T-cell (primary cell): ENCODE measurements at regions of chr9 and their contacts with region 1.

Region 1: DNA sequence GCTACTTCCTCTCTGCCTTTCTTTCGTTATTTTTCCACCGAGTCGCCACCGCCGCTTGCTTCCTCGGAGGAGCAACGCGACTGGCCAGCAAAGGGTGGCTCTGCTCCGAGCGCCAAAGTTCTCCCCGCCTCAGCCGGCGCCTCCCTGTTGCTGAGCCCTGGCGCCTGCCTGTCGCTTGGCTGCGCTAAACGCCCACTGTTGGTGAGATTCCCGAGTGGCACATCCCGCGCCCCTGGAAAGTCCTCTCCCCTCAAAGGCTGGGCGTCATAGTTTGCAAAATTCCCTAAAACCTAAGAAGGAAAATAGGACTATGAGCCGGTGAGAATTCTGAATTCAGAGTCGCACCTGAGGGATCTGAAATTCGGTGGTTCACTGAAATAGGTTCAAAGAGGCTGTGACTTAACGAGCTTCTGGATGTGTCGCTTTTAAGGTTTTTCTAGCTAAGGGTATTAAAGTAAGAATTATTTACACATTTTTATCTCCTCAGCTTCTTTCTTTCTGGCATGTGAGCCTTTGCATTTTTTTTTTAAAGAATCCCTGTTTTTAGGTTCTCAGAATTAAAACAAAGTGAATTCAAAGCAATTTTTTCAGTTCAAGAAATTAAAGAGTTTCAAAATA is at the start of gene GRIN3A:
- DNase-seq: no peak
- ATAC-seq: no peak
- H3K4me3 ChIP-seq: no peak within 1 kb of the TSS
- H3K4me3 Mint-ChIP-seq: peak within 1 kb of the TSS in 2 of 3 donors; percentile 42 to 74
- H3K27ac ChIP-seq: no peak within 1 kb of the TSS
- H3K27ac Mint-ChIP-seq: no peak within 1 kb of the TSS
- H3K4me1 ChIP-seq: no peaks in the 10 kb centered on the region
- H3K4me1 Mint-ChIP-seq: peaks cover 3 to 5% (median 3%) of the 10 kb centered on the region in 3 donors
- H3K27me3 ChIP-seq: peaks cover 16 to 17% of the 10 kb centered on the region in 2 experiments
- H3K27me3 Mint-ChIP-seq: peaks cover 40 to 67% of the 10 kb centered on the region in 2 donors
- total RNA-seq, gene GRIN3A: 0.08 TPM in 1 of 5 donors, not detected in the others

Region 2: GRCh38 chr9:101753716-101754115 is 15.0 kb after region 1 on chr9:
- CTCF ChIA-PET with region 1: no interaction called
- POLR2A ChIA-PET with region 1: interaction called in 1 of 2 experiments, 10 read pairs
- DNase-seq: no peak
- ATAC-seq: no peak
- H3K4me3 ChIP-seq: no peak overlapping the region
- H3K4me3 Mint-ChIP-seq: no peak overlapping the region
- H3K27ac ChIP-seq: no peak overlapping the region
- H3K27ac Mint-ChIP-seq: no peak overlapping the region
- H3K4me1 ChIP-seq: no peaks in the 10 kb centered on the region
- H3K4me1 Mint-ChIP-seq: no peaks in the 10 kb centered on the region
- H3K27me3 ChIP-seq: no peaks in the 10 kb centered on the region
- H3K27me3 Mint-ChIP-seq: peaks cover 0 to 7% of the 10 kb centered on the region in 2 donors

Region 3: GRCh38 chr9:101764472-101764871 is 25.8 kb after region 1 on chr9:
- CTCF ChIA-PET with region 1: no interaction called
- POLR2A ChIA-PET with region 1: no interaction called
- DNase-seq: no peak
- ATAC-seq: no peak
- H3K4me3 ChIP-seq: no peak overlapping the region
- H3K4me3 Mint-ChIP-seq: no peak overlapping the region
- H3K27ac ChIP-seq: no peak overlapping the region
- H3K27ac Mint-ChIP-seq: no peak overlapping the region
- H3K4me1 ChIP-seq: no peaks in the 10 kb centered on the region
- H3K4me1 Mint-ChIP-seq: peaks cover 0 to 4% (median 0%) of the 10 kb centered on the region in 3 donors
- H3K27me3 ChIP-seq: no peaks in the 10 kb centered on the region
- H3K27me3 Mint-ChIP-seq: peaks cover 0 to 7% of the 10 kb centered on the region in 2 donors